ENCODE measurements at regions of chr9 and their contacts with region 1.

Region 1: GRCh38 chr9:114653556-114654159 is 3.9 kb downstream of the TEX53 start:
- DNase-seq: peak; percentile 76
- H3K4me3 Mint-ChIP-seq: no peak overlapping the region
- H3K27ac Mint-ChIP-seq: peak overlapping the region; percentile 54
- H3K4me1 Mint-ChIP-seq: peaks cover 21% of the 10 kb centered on the region
- H3K27me3 Mint-ChIP-seq: no peaks in the 10 kb centered on the region

Region 2: DNA sequence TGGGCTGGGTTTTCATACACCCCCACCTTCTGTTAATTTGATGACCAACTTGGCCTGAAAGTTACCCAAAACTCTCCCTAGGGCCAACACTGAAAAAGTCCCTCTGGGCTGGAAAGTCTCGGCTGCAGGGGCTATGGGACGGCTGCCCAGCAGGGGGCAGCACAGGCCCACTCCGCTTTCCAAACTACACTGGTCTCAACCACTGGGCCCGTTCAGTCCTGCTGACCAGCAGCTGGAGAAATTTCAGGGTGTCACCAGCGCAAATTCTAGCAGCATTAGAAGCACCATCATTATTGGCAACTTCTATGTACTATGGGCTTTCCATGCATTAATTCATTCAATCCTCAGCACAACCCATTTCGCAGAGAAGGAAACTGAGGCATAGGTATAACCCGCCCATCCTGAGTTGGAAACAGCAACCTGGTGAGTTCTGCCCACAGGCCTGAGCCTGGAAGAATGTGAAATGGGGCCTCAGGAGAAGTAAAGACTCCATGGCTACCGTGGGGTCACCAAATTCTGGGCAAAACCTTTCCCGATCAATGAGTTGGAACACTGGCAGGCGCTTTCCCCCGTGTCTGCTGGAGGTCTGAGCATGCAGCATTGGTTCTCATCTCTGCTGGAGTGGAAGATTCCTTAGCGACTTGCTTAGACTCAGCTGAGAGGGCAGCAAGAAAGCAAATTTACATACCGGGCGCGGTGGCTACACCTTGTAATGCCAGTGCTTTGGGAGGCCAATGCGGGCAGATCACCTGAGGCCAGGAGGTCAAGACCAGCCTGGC is 314.3 kb before region 1 on chr9:
- intact Hi-C with region 1: loop called (anchors 1 kb)
- DNase-seq: no peak
- H3K4me3 Mint-ChIP-seq: no peak overlapping the region
- H3K27ac Mint-ChIP-seq: peak overlapping the region; percentile 48
- H3K4me1 Mint-ChIP-seq: peaks cover 5% of the 10 kb centered on the region
- H3K27me3 Mint-ChIP-seq: no peaks in the 10 kb centered on the region

Region 3: DNA sequence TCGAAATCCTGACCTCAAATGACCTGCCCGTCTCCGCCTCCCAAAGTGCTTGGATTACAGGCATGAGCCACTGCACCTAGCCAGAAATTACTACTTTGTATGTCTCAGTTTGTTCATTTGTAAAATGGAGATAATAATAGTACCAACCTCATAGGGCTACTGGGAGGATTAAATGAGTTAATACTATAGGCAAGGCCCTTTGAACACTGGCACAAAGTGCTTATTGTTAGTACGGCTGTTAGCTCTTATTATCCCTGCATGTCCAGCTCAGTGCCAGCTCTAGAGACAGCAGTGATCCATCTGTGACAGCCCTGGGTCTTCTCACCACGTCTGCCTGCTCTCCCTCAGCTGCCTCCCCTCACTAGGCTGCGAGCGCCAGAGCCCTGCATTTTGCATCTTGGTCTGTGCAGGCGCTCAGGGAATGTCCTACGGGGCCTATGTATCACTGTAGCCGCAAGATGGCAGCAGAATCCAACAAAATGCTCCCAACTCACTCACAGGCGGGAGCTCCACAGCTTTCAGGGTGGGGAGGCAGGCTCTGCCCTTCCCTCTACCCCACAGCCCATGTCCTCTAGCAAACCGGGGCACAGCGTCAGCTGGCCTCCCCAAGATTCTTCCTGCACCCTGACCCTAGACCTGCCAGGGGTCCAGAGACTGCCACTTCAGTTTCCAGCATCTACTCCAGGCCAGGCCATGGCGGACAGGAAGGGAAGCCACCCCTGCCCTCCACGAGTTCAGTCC is 248.2 kb before region 1 on chr9:
- intact Hi-C with region 1: loop called (anchors 1 kb)
- DNase-seq: peak; percentile 71
- H3K4me3 Mint-ChIP-seq: no peak overlapping the region
- H3K27ac Mint-ChIP-seq: no peak overlapping the region
- H3K4me1 Mint-ChIP-seq: peaks cover 6% of the 10 kb centered on the region
- H3K27me3 Mint-ChIP-seq: peaks cover 3% of the 10 kb centered on the region

Region 4: DNA sequence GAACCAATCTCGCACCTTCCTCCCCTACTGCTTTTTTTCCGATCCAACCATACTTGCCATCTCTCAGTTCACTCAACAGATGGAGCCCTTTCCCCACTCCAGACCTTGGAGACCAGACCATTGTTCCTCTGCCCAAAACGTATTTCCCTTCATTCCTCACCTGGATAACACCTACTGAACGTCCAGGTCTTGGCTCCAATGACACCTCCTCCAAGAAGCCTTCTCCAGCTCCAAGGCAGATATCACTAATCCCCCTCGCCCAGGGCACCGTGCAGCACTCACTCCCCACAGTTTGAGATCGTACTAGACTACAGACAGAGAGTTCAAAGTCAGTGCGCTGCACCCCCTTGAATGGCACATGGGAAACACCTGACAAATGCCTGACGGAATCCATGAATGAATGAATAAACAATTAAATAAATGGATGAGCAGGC is 218.8 kb before region 1 on chr9:
- intact Hi-C with region 1: loop called (anchors 1 kb)
- DNase-seq: no peak
- H3K4me3 Mint-ChIP-seq: no peak overlapping the region
- H3K27ac Mint-ChIP-seq: no peak overlapping the region
- H3K4me1 Mint-ChIP-seq: peaks cover 5% of the 10 kb centered on the region
- H3K27me3 Mint-ChIP-seq: peaks cover 5% of the 10 kb centered on the region

Region 5: DNA sequence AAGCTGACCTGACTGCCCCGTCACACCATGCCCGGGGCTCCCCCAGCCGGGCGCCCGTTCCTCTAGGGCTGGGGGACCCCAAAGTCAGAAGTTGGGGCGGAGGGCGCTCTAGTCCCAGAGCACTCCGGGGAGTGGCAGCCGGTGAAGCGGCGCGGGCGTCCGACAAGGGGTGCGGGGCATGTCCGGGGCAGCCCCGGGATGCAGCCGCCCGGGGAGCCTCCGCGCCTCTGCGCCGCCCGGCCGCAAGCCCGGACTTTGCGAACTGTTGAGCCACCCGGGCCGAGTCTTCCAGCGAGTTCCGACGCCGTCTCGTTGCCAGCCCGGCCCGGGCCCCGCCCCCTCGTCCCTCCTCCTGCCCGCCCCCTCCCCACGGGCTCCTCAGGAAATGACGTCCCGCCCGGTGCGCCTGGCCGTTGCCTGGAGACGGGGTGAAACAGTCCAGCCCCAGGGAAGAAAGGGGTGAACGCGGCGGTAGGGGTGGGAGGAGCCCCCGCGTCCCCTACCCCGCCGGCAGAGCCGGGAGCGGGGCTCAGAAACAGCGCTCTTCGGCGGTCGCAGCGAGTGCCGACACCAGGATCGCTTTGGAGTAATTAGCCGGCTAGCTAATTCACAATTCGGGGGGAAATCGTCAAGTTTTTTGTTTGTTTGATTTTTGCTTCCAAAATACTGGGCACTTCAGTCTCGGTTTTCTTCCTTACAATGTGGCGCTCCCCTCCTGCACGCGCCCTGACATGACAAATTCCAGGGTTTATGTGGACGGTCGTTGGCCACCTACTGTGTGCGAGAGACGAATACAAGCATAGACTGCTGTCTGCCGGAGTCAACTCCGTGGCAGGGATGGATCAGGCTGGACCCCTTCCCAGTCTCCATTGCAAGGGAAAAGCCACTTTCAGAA is 148.2 kb before region 1 on chr9 and contains the start of gene WHRN:
- intact Hi-C with region 1: loop called (anchors 1 kb)
- DNase-seq: peak; percentile 89
- H3K4me3 Mint-ChIP-seq: peak within 1 kb of the TSS; percentile 85
- H3K27ac Mint-ChIP-seq: peak within 1 kb of the TSS; percentile 79
- H3K4me1 Mint-ChIP-seq: peaks cover 19% of the 10 kb centered on the region
- H3K27me3 Mint-ChIP-seq: peaks cover 62% of the 10 kb centered on the region
- total RNA-seq, gene WHRN: 2.2 and 2.4 TPM in 2 replicates

Region 6: DNA sequence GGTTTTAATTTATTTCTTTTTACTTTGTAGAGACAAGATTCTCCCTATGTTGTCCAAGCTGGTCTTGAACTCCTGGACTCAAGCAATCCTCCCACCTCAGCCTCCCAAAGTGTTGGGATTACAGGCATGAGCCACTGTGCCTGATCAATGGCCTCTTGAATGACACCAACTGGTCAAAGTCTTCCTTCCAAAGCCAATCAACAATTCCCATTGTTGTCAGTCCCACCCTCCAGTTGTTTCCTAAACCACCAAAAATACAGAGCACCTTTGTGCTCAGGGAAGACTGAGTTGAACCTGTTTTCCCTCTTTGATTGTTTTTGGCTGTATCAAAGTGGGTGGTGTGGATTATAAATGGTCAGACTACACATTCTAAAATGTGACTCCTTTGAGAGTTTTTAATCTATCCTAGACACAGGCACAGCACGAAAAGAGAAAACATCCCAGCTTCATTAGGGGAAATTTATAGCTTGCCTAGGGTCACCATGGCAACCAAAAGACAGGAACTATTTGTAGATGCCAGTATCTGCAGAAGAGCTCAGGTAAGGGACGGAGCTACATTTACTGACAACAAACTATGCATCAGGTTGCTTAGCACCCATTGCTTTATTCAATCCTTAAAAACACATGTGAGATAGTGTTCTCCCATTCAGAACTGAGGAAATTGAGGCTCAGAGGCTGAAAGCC is 93.7 kb before region 1 on chr9:
- intact Hi-C with region 1: no loop called
- DNase-seq: no peak
- H3K4me3 Mint-ChIP-seq: no peak overlapping the region
- H3K27ac Mint-ChIP-seq: no peak overlapping the region
- H3K4me1 Mint-ChIP-seq: no peaks in the 10 kb centered on the region
- H3K27me3 Mint-ChIP-seq: peaks cover 9% of the 10 kb centered on the region

Region 7: DNA sequence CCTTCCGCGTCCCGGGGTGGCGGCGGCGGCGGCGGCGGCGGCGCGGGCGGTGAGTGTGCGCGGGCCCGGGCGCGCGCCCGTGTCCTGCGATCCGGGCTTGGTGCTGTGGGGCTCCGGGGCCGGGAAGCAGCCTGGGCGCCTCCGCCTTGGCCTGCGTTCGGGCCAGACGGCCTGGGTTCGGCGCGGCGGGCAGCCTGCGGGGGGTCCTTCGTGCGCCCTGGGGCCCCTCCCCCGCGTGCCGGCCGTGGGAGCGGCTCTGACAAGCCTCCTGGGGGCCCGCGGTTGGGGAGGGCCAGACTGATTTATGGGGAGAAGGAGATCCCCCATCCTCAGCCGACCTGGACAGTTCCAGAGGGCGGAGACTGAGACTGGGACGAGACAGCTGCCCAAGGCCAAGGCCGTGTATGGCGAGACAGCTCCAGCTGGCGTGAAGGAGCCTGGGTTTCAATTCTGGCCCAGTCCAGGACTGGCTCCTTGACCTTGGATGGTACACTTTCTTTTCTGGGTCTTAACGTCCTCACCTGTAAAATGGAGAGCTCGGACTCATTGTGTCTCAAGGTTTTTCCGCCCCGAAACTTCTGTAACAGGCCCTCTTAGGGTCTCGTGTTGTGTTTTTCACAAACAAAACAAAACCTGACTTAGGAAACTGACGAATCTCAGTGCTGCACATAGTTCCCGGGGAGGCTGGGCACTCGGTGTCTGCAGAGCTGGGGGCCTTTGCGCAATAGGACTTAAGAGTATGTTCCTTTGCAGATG is 42.0 kb before region 1 on chr9:
- intact Hi-C with region 1: loop called (anchors 5 kb)
- DNase-seq: no peak
- H3K4me3 Mint-ChIP-seq: peak overlapping the region; percentile 89
- H3K27ac Mint-ChIP-seq: peak overlapping the region; percentile 86
- H3K4me1 Mint-ChIP-seq: peaks cover 50% of the 10 kb centered on the region
- H3K27me3 Mint-ChIP-seq: peaks cover 2% of the 10 kb centered on the region

Region 8: DNA sequence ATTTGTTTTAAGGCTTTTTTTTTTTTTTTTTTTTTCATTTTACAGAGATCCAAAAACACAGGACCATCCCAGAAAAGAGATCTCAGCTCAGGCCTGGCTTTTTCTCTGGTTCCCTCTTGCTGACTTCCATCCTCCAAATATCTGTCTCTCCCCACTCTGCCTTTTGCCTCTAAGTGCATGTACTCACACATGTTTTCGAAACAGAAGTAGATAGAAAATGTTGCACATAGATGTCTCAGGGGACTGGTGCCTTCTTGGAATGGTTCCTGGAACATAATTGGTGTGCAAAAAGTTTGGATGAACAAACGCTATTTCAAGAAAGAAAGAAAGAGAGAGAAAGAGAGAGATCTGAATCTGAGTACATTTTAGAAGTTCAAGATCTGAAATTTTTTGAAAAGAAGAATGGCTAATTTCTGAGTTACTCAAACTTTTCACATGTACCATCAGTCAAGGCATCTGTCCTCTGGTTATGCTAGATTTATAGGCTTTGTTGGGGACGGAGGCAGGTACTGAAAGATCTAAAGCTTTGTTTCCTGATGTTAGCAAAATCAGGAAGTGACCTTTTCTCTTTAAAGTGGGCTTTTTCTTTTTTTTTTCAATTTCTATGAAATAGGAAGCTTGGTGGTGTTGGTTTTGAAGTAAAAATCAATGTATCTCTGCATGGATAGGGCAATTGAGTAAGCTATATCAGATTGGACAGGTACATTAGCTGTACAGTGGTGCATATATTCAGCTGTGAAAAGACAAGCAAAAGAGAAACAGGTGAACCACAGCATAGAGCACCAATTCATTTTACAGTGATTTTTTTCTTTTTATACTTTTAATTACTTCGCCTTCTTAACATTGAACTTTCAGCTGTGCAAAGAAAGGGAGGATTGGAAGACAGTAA is 285.3 kb after region 1 on chr9:
- intact Hi-C with region 1: no loop called
- DNase-seq: no peak
- H3K4me3 Mint-ChIP-seq: no peak overlapping the region
- H3K27ac Mint-ChIP-seq: peak overlapping the region; percentile 35
- H3K4me1 Mint-ChIP-seq: peaks cover 26% of the 10 kb centered on the region
- H3K27me3 Mint-ChIP-seq: no peaks in the 10 kb centered on the region